Activated CD4-positive, alpha-beta T cell treated with anti-CD3 and anti-CD28 coated beads for 36 hours (primary cell): ENCODE measurements at regions of chr16 and their contacts with region 1.

Region 1: DNA sequence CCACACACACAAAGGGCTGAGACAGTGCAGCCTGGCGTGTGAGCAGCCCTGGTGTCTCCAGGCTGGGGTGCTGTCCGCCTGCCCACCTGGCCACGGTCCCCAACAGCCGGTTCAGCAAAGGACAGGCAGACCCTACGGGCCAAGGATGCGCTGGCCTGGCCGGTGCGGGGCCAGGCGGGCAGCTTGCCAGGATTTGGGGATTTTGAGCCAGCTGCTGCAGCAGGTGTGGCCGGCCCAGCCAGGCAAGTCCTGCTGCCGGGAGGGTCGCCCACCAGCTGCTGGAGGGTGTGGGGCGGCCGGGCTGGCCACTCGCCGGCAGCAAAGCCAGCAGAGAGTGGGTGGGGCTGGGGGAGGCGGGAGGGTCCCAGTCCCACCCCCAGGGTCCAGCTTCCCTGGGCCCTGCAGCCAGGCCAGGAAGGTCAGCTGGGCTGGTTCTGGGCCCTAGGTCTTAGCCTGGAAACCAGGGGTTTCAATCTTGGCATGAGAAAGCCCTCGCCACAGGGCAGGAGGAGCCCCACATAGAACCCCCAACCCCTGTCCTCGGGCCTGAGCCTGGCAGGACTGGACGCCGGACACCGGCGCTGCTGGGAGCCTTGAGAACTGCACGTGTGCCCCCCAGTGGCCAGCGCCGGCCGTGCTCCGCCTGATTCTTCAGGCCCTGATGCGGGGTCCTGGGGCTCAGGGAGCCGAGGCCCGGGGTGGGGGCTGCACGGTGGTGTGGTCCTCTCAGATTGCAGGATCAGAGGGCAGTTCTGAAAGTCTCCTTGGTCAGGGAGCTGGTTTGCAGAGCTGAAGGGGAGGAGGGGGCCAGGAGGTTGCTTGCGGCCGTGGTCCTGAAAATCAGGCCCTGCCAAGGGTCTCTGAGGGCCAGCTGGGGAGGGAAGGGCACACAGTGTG is 17.6 kb upstream of the SSTR5 start:
- DNase-seq: peak; percentile 65
- ATAC-seq: peak; percentile 59
- H3K4me3 Mint-ChIP-seq: no peak overlapping the region
- H3K27ac Mint-ChIP-seq: no peak overlapping the region
- H3K4me1 Mint-ChIP-seq: no peaks in the 10 kb centered on the region
- H3K27me3 Mint-ChIP-seq: peaks cover 3% of the 10 kb centered on the region

Region 2: DNA sequence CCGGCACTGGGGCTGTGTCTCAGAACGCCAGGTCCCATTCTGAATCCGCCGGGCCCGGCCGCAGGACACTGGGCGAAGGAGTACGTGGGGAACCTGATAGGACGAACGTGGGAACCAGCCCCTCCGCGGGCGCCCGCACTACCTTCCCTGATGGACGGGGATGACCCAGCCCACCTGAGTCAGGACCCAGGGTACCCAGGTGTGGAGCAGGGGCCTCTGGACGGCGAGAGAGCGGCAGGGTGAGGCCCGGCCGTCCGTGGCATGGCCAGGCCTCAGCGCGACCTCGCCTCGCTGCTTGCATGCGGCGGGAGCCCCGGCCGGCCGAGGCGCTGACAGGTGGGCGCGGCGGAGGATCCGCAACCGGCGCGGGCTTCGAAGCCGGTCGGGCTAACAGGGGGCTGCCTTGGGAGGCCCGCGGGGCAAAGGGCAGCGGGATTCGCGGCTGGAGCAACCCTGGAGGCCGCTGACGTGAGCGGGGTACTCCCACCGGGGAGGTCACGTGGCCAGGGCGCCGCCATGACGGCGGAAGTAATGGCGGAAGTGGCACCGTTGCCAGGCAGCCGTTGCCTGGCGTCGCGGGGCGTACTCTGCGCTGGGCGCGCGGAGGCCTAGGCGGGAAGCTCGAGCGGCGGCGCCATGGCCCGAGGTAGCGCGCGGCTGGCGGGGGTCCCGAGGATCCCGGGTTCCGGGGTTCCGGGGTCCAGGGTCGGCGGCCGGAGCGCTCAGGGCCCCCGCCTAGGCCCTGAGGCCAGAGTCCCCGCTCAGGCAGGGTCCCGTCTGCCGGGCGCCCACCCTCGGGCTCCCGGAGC is 405.9 kb before region 1 on chr16 and contains the start of gene WDR90:
- CTCF ChIA-PET with region 1: no interaction called
- POLR2A ChIA-PET with region 1: no interaction called
- intact Hi-C with region 1: no loop called
- DNase-seq: peak; percentile 96
- ATAC-seq: peak; percentile 92
- H3K4me3 Mint-ChIP-seq: peak within 1 kb of the TSS; percentile 81
- H3K27ac Mint-ChIP-seq: peak within 1 kb of the TSS; percentile 73
- H3K4me1 Mint-ChIP-seq: peaks cover 15% of the 10 kb centered on the region
- H3K27me3 Mint-ChIP-seq: no peaks in the 10 kb centered on the region
- total RNA-seq, gene WDR90: 43.6 to 55.9 TPM

Region 3: GRCh38 chr16:855471-855870 is 199.4 kb before region 1 on chr16:
- CTCF ChIA-PET with region 1: no interaction called
- POLR2A ChIA-PET with region 1: no interaction called
- intact Hi-C with region 1: no loop called
- DNase-seq: no peak
- ATAC-seq: no peak
- H3K4me3 Mint-ChIP-seq: no peak overlapping the region
- H3K27ac Mint-ChIP-seq: no peak overlapping the region
- H3K4me1 Mint-ChIP-seq: no peaks in the 10 kb centered on the region
- H3K27me3 Mint-ChIP-seq: no peaks in the 10 kb centered on the region

Region 4: GRCh38 chr16:1194665-1195392 is 139.9 kb after region 1 on chr16:
- CTCF ChIA-PET with region 1: no interaction called
- POLR2A ChIA-PET with region 1: no interaction called
- intact Hi-C with region 1: loop called in 1 of 2 experiments (anchors 2 kb)
- DNase-seq: peak; percentile 49
- ATAC-seq: peak; percentile 43
- H3K4me3 Mint-ChIP-seq: no peak overlapping the region
- H3K27ac Mint-ChIP-seq: no peak overlapping the region
- H3K4me1 Mint-ChIP-seq: no peaks in the 10 kb centered on the region
- H3K27me3 Mint-ChIP-seq: no peaks in the 10 kb centered on the region